ENCODE measurements at regions of chr5 and their contacts with region 1.

Region 1: DNA sequence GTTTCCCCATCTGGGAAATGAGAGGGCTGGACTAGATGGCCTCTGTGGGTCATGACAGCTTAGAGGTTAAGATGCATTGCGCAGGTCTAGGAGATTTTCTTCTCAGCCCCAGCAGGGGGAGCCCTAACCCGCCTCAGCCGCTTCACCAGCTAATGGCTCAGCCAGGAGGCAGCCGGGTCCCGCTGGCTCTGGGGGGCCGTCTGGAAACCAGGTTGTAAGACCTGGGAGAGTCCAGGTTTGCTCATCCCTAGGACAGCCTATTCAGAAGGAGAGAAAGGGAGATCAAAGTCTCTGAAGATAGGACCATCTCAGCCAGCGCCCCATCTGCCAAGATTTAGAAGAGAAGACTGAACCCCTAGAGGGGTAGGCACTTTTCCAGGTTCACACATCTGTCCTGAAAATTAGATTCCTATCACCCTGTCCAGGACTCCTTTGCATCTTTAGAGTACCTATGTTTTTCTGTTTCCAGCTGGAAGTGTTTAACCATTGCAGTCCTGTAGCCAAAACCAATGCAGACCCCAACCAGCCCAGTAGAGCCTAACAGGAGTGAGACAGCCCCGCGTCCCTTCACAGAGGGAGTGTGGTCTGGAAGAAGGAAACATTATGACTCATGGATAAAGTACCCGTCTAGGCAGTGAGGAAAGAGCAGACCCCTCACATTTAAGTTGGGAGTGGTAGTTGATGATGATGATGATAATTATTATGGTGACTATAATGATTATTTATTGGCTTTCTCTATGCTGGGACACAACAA is 27.5 kb downstream of the SPARC start:
- DNase-seq: peak; percentile 83
- ATAC-seq: peak; percentile 100
- H3K4me3 Mint-ChIP-seq: no peak overlapping the region
- H3K27ac Mint-ChIP-seq: no peak overlapping the region
- H3K4me1 Mint-ChIP-seq: peaks cover 9% of the 10 kb centered on the region
- H3K27me3 Mint-ChIP-seq: peaks cover 2% of the 10 kb centered on the region
- CTCF ChIP-seq: peak; percentile 82

Region 2: GRCh38 chr5:151523335-151523734 is 135.8 kb before region 1 on chr5:
- CTCF ChIA-PET with region 1: interaction called, 7 read pairs
- POLR2A ChIA-PET with region 1: no interaction called
- intact Hi-C with region 1: loop called (anchors 10 kb)
- DNase-seq: peak; percentile 64
- ATAC-seq: peak; percentile 96
- H3K4me3 Mint-ChIP-seq: no peak overlapping the region
- H3K27ac Mint-ChIP-seq: no peak overlapping the region
- H3K4me1 Mint-ChIP-seq: no peaks in the 10 kb centered on the region
- H3K27me3 Mint-ChIP-seq: no peaks in the 10 kb centered on the region
- CTCF ChIP-seq: peak; percentile 62

Region 3: GRCh38 chr5:151719228-151720000 is 60.2 kb after region 1 on chr5:
- CTCF ChIA-PET with region 1: interaction called, 27 read pairs
- POLR2A ChIA-PET with region 1: no interaction called
- intact Hi-C with region 1: no loop called
- DNase-seq: peak; percentile 34
- ATAC-seq: peak; percentile 60
- H3K4me3 Mint-ChIP-seq: no peak overlapping the region
- H3K27ac Mint-ChIP-seq: no peak overlapping the region
- H3K4me1 Mint-ChIP-seq: peaks cover 9% of the 10 kb centered on the region
- H3K27me3 Mint-ChIP-seq: no peaks in the 10 kb centered on the region
- CTCF ChIP-seq: peak; percentile 55

Region 4: DNA sequence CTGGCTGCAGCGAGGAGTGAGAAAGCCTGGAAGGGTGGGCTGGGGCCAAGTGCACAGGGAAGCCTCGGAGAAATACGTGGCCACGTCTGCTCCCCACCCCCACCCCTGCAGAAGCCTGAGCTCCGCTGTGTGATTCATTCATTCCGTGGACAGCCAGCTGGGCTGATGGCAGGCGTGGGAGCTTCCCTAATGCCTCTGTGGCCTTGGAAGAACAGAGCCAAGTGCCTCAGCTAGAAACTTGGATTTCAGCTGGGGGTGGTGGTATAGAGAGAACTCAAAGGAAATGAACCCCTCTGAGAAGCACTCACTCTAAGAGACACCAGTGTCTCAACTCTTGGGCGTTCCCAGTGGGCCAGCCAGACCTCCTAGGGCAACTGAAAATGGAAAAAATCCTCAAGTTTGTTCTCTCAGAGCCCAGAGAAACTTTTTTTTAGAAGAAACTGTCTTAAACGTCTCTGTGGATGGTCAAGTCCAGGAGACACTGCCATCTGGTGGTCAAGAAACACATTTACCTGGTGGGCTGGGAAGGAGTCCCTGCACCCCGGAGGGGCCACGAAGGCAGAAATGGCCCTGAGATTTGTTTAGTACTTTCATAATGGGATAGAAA is 81.3 kb after region 1 on chr5:
- CTCF ChIA-PET with region 1: interaction called, 111 read pairs
- POLR2A ChIA-PET with region 1: interaction called, 3 read pairs
- intact Hi-C with region 1: loop called (anchors 2 kb)
- DNase-seq: peak; percentile 59
- ATAC-seq: peak; percentile 65
- H3K4me3 Mint-ChIP-seq: no peak overlapping the region
- H3K27ac Mint-ChIP-seq: no peak overlapping the region
- H3K4me1 Mint-ChIP-seq: peaks cover 14% of the 10 kb centered on the region
- H3K27me3 Mint-ChIP-seq: no peaks in the 10 kb centered on the region
- CTCF ChIP-seq: peak; percentile 83

Region 5: DNA sequence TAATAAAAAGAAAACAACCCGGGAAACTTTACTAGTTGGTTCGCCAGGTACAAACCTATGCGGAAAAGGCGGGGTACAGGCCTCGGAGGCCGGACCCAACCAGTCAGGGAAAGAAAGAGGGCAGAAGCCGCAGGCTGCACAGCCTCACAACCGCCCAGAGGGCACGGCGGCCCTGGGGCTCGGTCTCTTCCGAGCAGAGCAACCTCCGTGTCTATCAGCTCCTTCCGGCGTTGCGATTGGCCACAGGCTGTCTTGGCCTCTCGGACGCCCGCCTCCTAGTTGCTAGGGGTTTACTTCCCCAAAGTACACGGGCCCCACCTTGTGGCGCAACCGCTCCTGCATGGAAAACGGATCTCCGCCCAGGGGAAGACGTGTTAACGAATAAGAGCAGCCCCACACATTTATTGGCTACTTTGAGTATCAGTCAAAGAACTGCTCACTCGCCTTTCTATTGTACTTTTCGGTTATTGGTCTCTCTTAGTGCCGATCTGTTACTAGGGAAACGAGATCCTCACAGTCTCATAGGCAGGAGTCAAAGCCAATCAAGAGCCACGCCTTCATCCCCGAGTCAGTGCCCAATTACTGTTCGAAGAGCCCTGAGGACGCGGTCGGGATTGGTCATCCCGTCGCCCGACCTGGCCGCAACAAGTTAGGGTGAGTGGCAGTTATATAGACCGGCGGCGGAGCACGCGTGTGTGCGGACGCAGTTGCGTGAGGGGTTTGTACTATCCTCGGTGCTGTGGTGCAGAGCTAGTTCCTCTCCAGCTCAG is 112.3 kb after region 1 on chr5 and contains the start of gene G3BP1:
- CTCF ChIA-PET with region 1: interaction called, 27 read pairs
- POLR2A ChIA-PET with region 1: interaction called, 4 read pairs
- intact Hi-C with region 1: no loop called
- DNase-seq: peak; percentile 100
- ATAC-seq: peak; percentile 84
- H3K4me3 Mint-ChIP-seq: peak within 1 kb of the TSS; percentile 87
- H3K27ac Mint-ChIP-seq: peak within 1 kb of the TSS; percentile 84
- H3K4me1 Mint-ChIP-seq: peaks cover 31% of the 10 kb centered on the region
- H3K27me3 Mint-ChIP-seq: no peaks in the 10 kb centered on the region
- CTCF ChIP-seq: peak; percentile 25
- total RNA-seq, gene G3BP1: 247 to 253 TPM

Measured in activated CD8-positive, alpha-beta T cell treated with anti-CD3 and anti-CD28 coated beads for 36 hours (primary cell).